Calu3 (cell line): ENCODE measurements at regions of chr1 and their contacts with region 1.

Region 1: GRCh38 chr1:172002725-172003345 is 161.5 kb downstream of the DNM3 start:
- DNase-seq: peak; percentile 60
- H3K4me3 Mint-ChIP-seq: no peak overlapping the region
- H3K27ac Mint-ChIP-seq: no peak overlapping the region
- H3K4me1 Mint-ChIP-seq: peaks cover 41% of the 10 kb centered on the region
- H3K27me3 Mint-ChIP-seq: no peaks in the 10 kb centered on the region
- CTCF ChIP-seq: peak; percentile 49

Region 2: GRCh38 chr1:171841050-171841940 is 161.5 kb before region 1 on chr1 and contains the start of gene DNM3:
- CTCF ChIA-PET with region 1: no interaction called
- intact Hi-C with region 1: no loop called
- DNase-seq: peak; percentile 85
- H3K4me3 Mint-ChIP-seq: peak within 1 kb of the TSS; percentile 82
- H3K27ac Mint-ChIP-seq: peak within 1 kb of the TSS; percentile 51
- H3K4me1 Mint-ChIP-seq: peaks cover 21% of the 10 kb centered on the region
- H3K27me3 Mint-ChIP-seq: peaks cover 64% of the 10 kb centered on the region
- CTCF ChIP-seq: no peak
- total RNA-seq, gene DNM3: 1.2 and 1.3 TPM in 2 replicates

Region 3: DNA sequence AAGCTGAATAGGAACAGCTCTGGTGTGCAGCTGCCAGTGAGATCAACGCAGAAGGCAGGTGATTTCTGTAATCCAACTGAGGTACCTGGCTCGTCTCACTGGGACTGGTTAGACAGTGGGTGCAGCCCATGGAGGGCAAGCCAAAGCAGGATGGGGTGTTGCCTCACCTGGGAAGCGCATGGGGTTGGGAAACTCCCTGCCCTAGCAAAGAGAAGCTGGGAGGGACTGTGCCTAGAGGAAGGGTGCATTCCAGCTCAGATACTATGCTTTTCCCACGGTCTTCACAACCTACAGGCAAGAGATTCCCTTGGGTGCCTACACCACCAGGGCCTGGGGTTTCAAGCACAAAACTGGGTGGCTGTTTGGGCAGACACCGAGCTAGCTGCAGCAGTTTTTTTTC is 21.7 kb after region 1 on chr1:
- CTCF ChIA-PET with region 1: interaction called, 10 read pairs
- intact Hi-C with region 1: no loop called
- DNase-seq: peak; percentile 24
- H3K4me3 Mint-ChIP-seq: no peak overlapping the region
- H3K27ac Mint-ChIP-seq: no peak overlapping the region
- H3K4me1 Mint-ChIP-seq: peaks cover 15% of the 10 kb centered on the region
- H3K27me3 Mint-ChIP-seq: no peaks in the 10 kb centered on the region
- CTCF ChIP-seq: no peak

Region 4: GRCh38 chr1:172167796-172168596 is 165.2 kb after region 1 on chr1:
- CTCF ChIA-PET with region 1: no interaction called
- intact Hi-C with region 1: loop called (anchors 10 kb)
- DNase-seq: peak; percentile 62
- H3K4me3 Mint-ChIP-seq: peak overlapping the region; percentile 27
- H3K27ac Mint-ChIP-seq: peak overlapping the region; percentile 58
- H3K4me1 Mint-ChIP-seq: peaks cover 73% of the 10 kb centered on the region
- H3K27me3 Mint-ChIP-seq: no peaks in the 10 kb centered on the region
- CTCF ChIP-seq: no peak

Region 5: DNA sequence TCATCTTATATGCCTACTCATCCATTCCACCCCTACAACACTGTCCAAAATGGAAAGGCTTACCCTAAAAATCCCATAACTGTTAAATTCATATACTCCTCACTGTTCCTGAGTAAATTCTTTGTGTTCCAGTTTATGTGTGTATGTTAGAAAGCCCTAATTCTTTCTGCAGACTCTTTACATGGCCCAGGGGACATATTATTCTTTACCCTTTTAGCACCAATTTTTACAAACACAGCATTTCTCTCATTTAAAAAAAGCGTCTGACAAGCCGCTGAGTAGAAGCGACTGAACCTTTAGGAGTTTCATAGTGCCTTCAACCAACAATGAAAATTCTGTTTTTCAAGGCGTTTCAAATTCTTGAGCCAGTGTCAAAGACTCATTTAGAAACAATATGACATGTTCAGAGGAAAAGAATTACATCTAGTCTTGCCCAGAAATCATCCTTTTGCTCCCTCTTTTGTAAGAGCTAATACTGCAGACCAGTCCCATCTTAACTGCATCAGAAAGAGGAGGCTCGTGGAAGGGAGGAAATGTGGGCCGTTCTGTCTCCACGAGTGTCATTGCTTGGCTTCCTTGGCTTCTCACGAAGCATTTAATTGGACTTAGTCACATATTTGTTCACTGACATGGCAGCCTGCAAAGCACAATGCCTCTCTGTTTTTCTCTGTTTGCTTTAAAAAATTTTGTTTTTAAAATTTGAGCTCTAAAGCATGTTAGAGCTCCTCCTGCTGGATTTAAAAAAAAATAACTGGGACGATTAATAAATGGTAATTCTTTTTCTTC is 396.3 kb after region 1 on chr1:
- CTCF ChIA-PET with region 1: interaction called, 18 read pairs
- intact Hi-C with region 1: loop called (anchors 1 kb)
- DNase-seq: peak; percentile 65
- H3K4me3 Mint-ChIP-seq: peak overlapping the region; percentile 13
- H3K27ac Mint-ChIP-seq: peak overlapping the region; percentile 76
- H3K4me1 Mint-ChIP-seq: peaks cover 48% of the 10 kb centered on the region
- H3K27me3 Mint-ChIP-seq: no peaks in the 10 kb centered on the region
- CTCF ChIP-seq: peak; percentile 43

Region 6: GRCh38 chr1:172443626-172444453 is 441.0 kb after region 1 on chr1 and contains the start of gene PIGC:
- CTCF ChIA-PET with region 1: interaction called, 5 read pairs
- intact Hi-C with region 1: loop called (anchors 1 kb)
- DNase-seq: peak; percentile 97
- H3K4me3 Mint-ChIP-seq: peak within 1 kb of the TSS; percentile 87
- H3K27ac Mint-ChIP-seq: peak within 1 kb of the TSS; percentile 79
- H3K4me1 Mint-ChIP-seq: peaks cover 40% of the 10 kb centered on the region
- H3K27me3 Mint-ChIP-seq: no peaks in the 10 kb centered on the region
- CTCF ChIP-seq: peak; percentile 90
- total RNA-seq, gene PIGC: 29.2 TPM in 2 replicates

Region 7: GRCh38 chr1:172719694-172720138 is 716.9 kb after region 1 on chr1:
- CTCF ChIA-PET with region 1: no interaction called
- intact Hi-C with region 1: loop called (anchors 10 kb)
- DNase-seq: peak; percentile 35
- H3K4me3 Mint-ChIP-seq: no peak overlapping the region
- H3K27ac Mint-ChIP-seq: no peak overlapping the region
- H3K4me1 Mint-ChIP-seq: peaks cover 46% of the 10 kb centered on the region
- H3K27me3 Mint-ChIP-seq: no peaks in the 10 kb centered on the region
- CTCF ChIP-seq: peak; percentile 86